ENCODE measurements at regions of chr22 and their contacts with region 1.

Region 1: DNA sequence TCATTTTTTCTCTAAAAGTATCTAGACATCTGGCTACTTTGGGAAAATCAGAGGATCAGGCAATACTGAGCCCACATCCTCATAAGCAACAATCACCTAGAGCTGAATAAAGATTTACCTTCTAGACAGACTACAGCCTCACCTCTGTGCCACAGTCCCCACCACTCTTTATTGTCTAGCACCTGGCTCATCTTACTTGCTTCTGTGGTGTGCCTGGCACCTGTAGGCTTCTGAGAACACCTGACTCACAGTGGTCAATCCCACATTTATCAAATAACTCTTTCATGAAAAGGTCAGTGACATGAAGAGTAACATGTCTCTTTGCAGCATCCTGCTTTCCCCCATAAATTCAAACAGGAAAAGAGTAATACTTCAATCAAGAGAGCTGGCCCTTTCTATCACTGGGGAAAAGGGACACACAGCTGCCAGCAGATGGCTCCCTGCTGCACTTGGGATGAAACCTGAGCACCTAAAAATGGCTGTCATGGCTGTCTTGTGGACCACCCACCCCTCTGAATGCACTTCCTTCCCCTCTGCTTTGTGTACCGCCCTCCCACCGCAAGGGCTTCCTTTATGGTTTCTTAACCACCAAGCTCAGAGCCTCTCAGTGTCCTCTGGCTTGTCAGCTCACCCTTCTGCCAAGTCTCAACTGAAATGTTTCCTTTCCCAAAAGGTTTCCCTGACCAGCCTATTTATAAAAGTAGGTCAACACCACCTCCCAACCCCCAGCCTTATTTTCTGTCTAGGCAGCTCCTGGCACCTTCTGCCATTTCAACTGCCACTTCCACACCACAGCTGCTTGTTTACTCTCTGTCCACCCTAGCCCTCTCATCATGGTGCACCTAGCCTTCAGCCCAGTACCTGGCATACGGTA is 9.3 kb downstream of the TFIP11 start:
- DNase-seq: peak; percentile 94
- ATAC-seq: peak; percentile 93
- H3K4me3 Mint-ChIP-seq: peak overlapping the region; percentile 70
- H3K27ac Mint-ChIP-seq: peak overlapping the region; percentile 93
- H3K4me1 Mint-ChIP-seq: peaks cover 37% of the 10 kb centered on the region
- H3K27me3 Mint-ChIP-seq: no peaks in the 10 kb centered on the region

Region 2: GRCh38 chr22:26483439-26484359 is 19.2 kb before region 1 on chr22 and contains the starts of genes HPS4 and SRRD:
- CTCF ChIA-PET with region 1: interaction called, 55 read pairs
- POLR2A ChIA-PET with region 1: interaction called, 21 read pairs
- DNase-seq: peak; percentile 93
- ATAC-seq: peak; percentile 81
- H3K4me3 Mint-ChIP-seq: peak within 1 kb of the TSS; percentile 86
- H3K27ac Mint-ChIP-seq: peak within 1 kb of the TSS; percentile 94
- H3K4me1 Mint-ChIP-seq: peaks cover 68% of the 10 kb centered on the region
- H3K27me3 Mint-ChIP-seq: no peaks in the 10 kb centered on the region
- total RNA-seq, gene HPS4: 32.2 to 34.6 TPM
- total RNA-seq, gene SRRD: 21.6 to 22.6 TPM

Region 3: DNA sequence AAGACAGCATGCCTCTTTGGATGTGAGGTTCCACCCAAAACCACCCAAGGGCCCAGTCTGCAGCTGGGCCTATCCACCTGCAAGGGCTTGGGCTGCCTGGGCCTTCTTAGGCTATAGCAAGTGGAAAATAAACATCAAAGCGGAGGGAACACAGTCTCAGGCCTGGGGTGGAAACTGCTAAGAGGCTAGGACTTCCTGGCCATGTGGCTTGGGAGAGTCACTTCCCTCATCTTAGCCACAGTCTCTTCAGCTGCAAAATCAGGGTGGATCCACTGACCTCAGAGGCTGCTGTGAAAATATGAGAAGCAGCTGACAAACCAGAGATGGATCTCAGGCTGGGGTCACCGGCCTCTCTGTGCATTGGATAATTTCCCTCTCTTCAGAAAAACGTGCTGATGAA is 39.9 kb after region 1 on chr22:
- CTCF ChIA-PET with region 1: interaction called, 11 read pairs
- POLR2A ChIA-PET with region 1: no interaction called
- DNase-seq: peak; percentile 59
- ATAC-seq: peak; percentile 73
- H3K4me3 Mint-ChIP-seq: no peak overlapping the region
- H3K27ac Mint-ChIP-seq: peak overlapping the region; percentile 75
- H3K4me1 Mint-ChIP-seq: peaks cover 53% of the 10 kb centered on the region
- H3K27me3 Mint-ChIP-seq: no peaks in the 10 kb centered on the region

Region 4: GRCh38 chr22:26610072-26610958 is 107.4 kb after region 1 on chr22:
- CTCF ChIA-PET with region 1: interaction called, 10 read pairs
- POLR2A ChIA-PET with region 1: no interaction called
- DNase-seq: peak; percentile 78
- ATAC-seq: peak; percentile 84
- H3K4me3 Mint-ChIP-seq: peak overlapping the region; percentile 56
- H3K27ac Mint-ChIP-seq: peak overlapping the region; percentile 91
- H3K4me1 Mint-ChIP-seq: peaks cover 27% of the 10 kb centered on the region
- H3K27me3 Mint-ChIP-seq: peaks cover 21% of the 10 kb centered on the region

Region 5: DNA sequence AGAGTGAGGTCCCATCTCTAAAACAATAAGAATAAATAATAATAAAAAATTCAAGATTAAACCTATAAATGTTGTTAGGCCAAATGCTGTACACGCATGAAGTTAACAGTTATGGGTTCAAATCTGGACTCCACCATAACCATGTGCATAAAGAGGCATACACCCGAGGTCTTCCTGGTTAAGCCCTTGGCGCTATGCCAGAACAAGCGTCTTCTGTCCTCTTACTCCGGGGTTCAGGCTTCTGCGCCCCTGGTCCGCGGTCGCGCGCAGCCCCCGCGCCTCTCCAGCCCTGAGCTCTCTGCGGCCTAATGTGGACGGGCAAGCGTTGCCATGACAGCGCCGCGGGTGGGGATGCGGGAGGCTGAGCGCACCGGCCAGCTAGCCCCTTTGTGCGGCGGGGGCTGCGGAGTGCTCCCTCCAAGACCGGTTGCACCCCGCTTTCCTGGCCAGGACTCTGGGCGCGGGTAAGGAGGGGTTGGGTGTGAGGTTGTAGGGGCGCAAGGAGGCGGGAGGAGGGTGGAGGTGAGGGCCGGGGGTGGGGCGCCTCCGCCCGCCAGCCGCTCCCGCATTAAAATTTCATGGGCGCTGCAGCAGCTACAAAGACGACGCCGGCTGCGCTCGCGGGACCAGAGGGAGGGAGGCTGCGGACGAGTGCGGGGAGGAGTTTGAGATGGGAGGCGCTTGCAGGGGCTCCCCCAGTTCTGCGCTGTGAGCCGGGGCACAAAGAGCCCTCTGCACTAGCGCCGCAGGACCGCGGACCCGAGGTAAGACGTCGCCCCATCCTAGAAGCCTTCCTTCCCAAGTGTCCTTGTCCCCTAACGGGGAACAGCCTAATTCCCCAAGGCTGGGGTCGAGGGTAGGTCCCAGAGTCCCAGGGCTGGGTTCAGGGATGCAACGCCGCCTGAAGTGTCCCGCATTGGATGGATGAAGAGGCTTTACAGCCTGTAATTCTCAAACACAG is 154.2 kb after region 1 on chr22 and contains the start of gene MIAT:
- CTCF ChIA-PET with region 1: interaction called, 17 read pairs
- POLR2A ChIA-PET with region 1: interaction called, 3 read pairs
- DNase-seq: peak; percentile 87
- ATAC-seq: peak; percentile 93
- H3K4me3 Mint-ChIP-seq: peak within 1 kb of the TSS; percentile 87
- H3K27ac Mint-ChIP-seq: peak within 1 kb of the TSS; percentile 88
- H3K4me1 Mint-ChIP-seq: peaks cover 22% of the 10 kb centered on the region
- H3K27me3 Mint-ChIP-seq: peaks cover 13% of the 10 kb centered on the region
- total RNA-seq, gene MIAT: 23.6 to 26.3 TPM

Region 6: DNA sequence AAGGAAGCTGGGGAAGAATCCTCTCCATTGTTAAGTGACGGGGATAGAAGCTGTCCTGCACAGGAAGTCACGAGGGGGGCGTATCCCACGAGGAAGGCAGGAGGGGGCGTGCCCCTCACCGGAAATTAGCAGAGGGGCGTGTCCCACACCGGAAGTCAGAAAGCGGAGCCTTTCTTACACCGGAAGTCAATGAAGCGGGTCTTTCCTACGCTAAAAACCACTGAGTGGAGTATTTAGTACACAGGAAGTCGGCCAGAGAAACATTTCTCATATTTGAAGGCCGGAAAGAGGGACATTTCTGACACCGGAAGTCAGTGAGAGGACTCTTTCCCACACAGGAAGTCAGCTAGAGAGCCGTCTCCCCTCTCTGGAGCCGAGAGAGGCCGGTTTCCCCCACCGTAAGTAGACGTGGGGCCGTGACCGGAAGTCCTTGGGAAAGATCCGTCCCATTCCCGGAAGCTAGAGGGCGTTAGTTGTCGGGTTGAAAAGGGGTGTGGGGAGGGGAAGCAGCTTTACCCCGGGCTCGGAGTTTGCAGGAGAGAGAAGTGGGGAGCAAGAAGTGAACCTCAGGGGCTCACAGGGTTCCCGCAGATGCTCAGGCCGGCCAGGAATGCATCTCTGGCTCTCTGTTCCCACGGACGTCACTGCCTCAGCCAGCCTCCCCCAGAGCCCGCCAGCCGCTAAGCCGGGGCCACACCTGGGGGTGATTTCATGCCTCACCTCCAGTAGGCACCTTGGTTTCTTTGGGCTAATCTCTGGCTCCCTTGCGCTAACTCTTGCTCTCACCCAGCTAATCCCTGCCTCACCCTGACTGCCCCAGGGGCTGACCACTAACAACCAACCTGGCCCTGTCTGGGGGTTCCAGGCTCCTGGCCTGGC is 169.9 kb after region 1 on chr22:
- CTCF ChIA-PET with region 1: interaction called, 76 read pairs
- POLR2A ChIA-PET with region 1: interaction called, 8 read pairs
- DNase-seq: peak; percentile 97
- ATAC-seq: peak; percentile 68
- H3K4me3 Mint-ChIP-seq: peak overlapping the region; percentile 97
- H3K27ac Mint-ChIP-seq: peak overlapping the region; percentile 98
- H3K4me1 Mint-ChIP-seq: peaks cover 70% of the 10 kb centered on the region
- H3K27me3 Mint-ChIP-seq: no peaks in the 10 kb centered on the region

Measured in activated CD8-positive, alpha-beta T cell treated with anti-CD3 and anti-CD28 coated beads, Interleukin-2, amount 10 ng/mL, durations not matched to agents 7 days and 5 days (primary cell).